Right ventricle myocardium inferior (tissue), 1 donor: ENCODE measurements at regions of chr1 and their contacts with region 1.

Region 1: GRCh38 chr1:232630047-232630893 is at the start of gene SIPA1L2:
- DNase-seq: peak; percentile 96
- ATAC-seq: peak; percentile 97
- total RNA-seq, gene SIPA1L2: 120 TPM

Region 2: GRCh38 chr1:232319072-232319471 is 311.2 kb before region 1 on chr1:
- intact Hi-C with region 1: loop called (anchors 1 kb)
- DNase-seq: peak; percentile 90
- ATAC-seq: peak; percentile 93

Region 3: GRCh38 chr1:232486454-232487207 is 143.6 kb before region 1 on chr1:
- intact Hi-C with region 1: loop called (anchors 10 kb)
- DNase-seq: no peak
- ATAC-seq: peak; percentile 85

Region 4: GRCh38 chr1:232950197-232951176 is 320.2 kb after region 1 on chr1 and contains the start of gene NTPCR:
- intact Hi-C with region 1: loop called (anchors 5 kb)
- DNase-seq: peak; percentile 96
- ATAC-seq: peak; percentile 96
- total RNA-seq, gene NTPCR: 53.2 TPM